ENCODE measurements at regions of chr10 and their contacts with region 1.

Region 1: GRCh38 chr10:97498076-97498840 is at the start of gene MMS19:
- DNase-seq: peak; percentile 100
- ATAC-seq: peak; percentile 91
- H3K4me3 Mint-ChIP-seq: peak within 1 kb of the TSS; percentile 87
- H3K27ac Mint-ChIP-seq: peak within 1 kb of the TSS; percentile 97
- H3K4me1 Mint-ChIP-seq: peaks cover 38% of the 10 kb centered on the region
- H3K27me3 Mint-ChIP-seq: peaks cover 20% of the 10 kb centered on the region
- total RNA-seq, gene MMS19: 91.3 to 107 TPM

Region 2: DNA sequence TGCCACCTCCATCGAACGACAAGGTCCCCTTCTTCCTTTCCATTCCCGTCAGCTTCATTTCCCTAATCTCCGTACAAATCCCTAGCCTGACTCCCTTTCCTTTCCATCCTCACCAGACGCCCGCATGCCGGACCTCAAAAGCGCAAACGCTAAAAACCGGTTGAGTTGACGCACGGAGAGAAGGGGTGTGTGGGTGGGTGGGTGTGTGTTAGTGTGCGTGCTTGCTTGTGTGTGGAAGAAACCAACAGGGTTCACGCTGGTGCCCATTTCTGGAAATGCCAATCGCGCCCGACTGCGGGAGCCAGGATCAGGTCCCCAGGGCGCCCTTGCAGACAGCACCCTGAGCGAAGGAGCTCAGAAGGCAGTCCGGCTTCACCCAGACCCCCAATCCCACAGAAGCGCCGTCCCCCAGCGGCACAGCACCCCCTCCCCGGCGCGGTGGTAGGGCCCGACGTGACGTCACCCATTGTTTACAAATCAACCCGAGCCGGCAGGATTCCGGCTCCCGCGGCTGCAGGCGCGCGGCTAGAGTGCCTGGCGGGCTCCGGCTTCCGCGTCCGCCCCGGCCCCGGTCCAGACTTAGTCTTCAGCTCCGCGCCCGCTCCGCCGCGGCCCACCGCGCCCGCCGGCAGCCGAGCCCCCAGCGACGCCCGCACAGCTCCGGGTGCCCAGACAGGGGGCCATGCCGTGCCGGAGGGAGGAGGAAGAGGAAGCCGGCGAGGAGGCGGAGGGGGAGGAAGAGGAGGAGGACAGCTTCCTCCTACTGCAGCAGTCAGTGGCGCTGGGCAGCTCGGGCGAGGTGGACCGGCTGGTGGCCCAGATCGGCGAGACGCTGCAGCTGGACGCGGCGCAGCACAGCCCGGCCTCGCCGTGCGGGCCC is 179.2 kb before region 1 on chr10 and contains the start of gene FRAT1:
- CTCF ChIA-PET with region 1: no interaction called
- POLR2A ChIA-PET with region 1: no interaction called
- intact Hi-C with region 1: loop called in 1 of 2 experiments (anchors 1 kb)
- DNase-seq: peak; percentile 92
- ATAC-seq: peak; percentile 64
- H3K4me3 Mint-ChIP-seq: peak within 1 kb of the TSS; percentile 91
- H3K27ac Mint-ChIP-seq: peak within 1 kb of the TSS; percentile 99
- H3K4me1 Mint-ChIP-seq: peaks cover 29% of the 10 kb centered on the region
- H3K27me3 Mint-ChIP-seq: no peaks in the 10 kb centered on the region
- total RNA-seq, gene FRAT1: 1.3 to 1.8 TPM

Region 3: GRCh38 chr10:97390091-97390490 is 108.2 kb before region 1 on chr10:
- CTCF ChIA-PET with region 1: no interaction called
- POLR2A ChIA-PET with region 1: no interaction called
- intact Hi-C with region 1: no loop called
- DNase-seq: no peak
- ATAC-seq: no peak
- H3K4me3 Mint-ChIP-seq: no peak overlapping the region
- H3K27ac Mint-ChIP-seq: no peak overlapping the region
- H3K4me1 Mint-ChIP-seq: no peaks in the 10 kb centered on the region
- H3K27me3 Mint-ChIP-seq: no peaks in the 10 kb centered on the region

Region 4: GRCh38 chr10:97425964-97426775 is 72.1 kb before region 1 on chr10 and contains the start of gene PGAM1:
- CTCF ChIA-PET with region 1: interaction called, 6 read pairs
- POLR2A ChIA-PET with region 1: interaction called, 3 read pairs
- intact Hi-C with region 1: loop called in 1 of 2 experiments (anchors 1 kb)
- DNase-seq: peak; percentile 97
- ATAC-seq: peak; percentile 71
- H3K4me3 Mint-ChIP-seq: peak within 1 kb of the TSS; percentile 96
- H3K27ac Mint-ChIP-seq: peak within 1 kb of the TSS; percentile 98
- H3K4me1 Mint-ChIP-seq: peaks cover 52% of the 10 kb centered on the region
- H3K27me3 Mint-ChIP-seq: no peaks in the 10 kb centered on the region
- total RNA-seq, gene PGAM1: 1,151 to 1,499 TPM

Region 5: GRCh38 chr10:97632949-97633884 is 135.0 kb after region 1 on chr10 and contains the start of gene MORN4:
- CTCF ChIA-PET with region 1: no interaction called
- POLR2A ChIA-PET with region 1: no interaction called
- intact Hi-C with region 1: loop called (anchors 1 to 2 kb)
- DNase-seq: peak; percentile 94
- ATAC-seq: peak; percentile 99
- H3K4me3 Mint-ChIP-seq: peak within 1 kb of the TSS; percentile 85
- H3K27ac Mint-ChIP-seq: peak within 1 kb of the TSS; percentile 85
- H3K4me1 Mint-ChIP-seq: peaks cover 16% of the 10 kb centered on the region
- H3K27me3 Mint-ChIP-seq: no peaks in the 10 kb centered on the region
- total RNA-seq, gene MORN4: 3.9 to 5.3 TPM

Region 6: DNA sequence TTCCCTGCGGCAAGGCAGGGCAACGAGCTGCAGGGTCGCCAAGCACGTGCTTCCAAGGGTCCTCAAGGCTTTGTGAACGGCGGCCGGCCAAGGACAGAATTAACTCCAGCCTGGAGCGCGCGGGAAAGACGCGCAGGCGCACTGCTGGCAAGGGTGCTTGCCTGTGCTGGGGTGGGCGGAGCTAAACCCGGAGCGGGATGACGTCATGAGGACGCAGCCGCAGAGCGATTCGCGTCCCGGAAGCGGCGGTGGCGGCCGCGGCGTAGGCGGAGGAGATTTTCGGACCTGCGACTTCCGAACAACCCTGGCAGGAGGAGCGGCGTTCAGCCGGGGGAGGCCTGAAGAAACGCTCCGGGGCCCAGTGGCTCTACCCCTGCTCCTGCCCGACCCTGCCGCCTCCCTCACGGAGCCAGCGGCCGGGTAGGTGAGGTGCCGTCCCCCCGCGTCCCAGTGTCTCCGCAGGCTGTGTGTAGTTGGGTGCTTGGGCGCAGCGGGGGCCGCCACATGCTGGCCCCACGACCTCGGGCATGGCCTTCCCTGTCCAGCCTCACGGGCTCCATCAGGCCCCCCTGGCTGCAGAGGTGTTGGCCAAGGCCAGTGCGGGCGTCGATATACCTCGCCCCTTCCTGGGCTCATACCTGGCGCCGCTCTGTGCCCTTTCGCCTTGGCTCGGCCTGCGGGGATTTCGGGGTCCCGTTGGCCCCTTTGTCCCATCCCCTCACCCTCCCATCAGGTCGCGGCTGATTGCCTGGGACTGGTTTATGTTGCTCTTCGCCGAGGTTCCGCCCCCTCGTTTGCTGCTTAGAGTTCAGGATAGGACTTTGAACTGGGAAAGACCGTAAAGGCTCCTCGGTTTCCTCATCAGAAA is 238.9 kb after region 1 on chr10 and contains the start of gene ZFYVE27:
- CTCF ChIA-PET with region 1: no interaction called
- POLR2A ChIA-PET with region 1: no interaction called
- intact Hi-C with region 1: loop called in 1 of 2 experiments (anchors 1 kb)
- DNase-seq: peak; percentile 98
- ATAC-seq: peak; percentile 90
- H3K4me3 Mint-ChIP-seq: peak within 1 kb of the TSS; percentile 88
- H3K27ac Mint-ChIP-seq: peak within 1 kb of the TSS; percentile 93
- H3K4me1 Mint-ChIP-seq: peaks cover 45% of the 10 kb centered on the region
- H3K27me3 Mint-ChIP-seq: no peaks in the 10 kb centered on the region
- total RNA-seq, gene ZFYVE27: 20.2 to 22.6 TPM

Region 7: GRCh38 chr10:98150544-98150943 is 652.3 kb after region 1 on chr10:
- CTCF ChIA-PET with region 1: no interaction called
- POLR2A ChIA-PET with region 1: no interaction called
- intact Hi-C with region 1: no loop called
- DNase-seq: no peak
- ATAC-seq: no peak
- H3K4me3 Mint-ChIP-seq: no peak overlapping the region
- H3K27ac Mint-ChIP-seq: no peak overlapping the region
- H3K4me1 Mint-ChIP-seq: peaks cover 14% of the 10 kb centered on the region
- H3K27me3 Mint-ChIP-seq: no peaks in the 10 kb centered on the region

Measured in activated CD4-positive, alpha-beta T cell treated with anti-CD3 and anti-CD28 coated beads for 36 hours (primary cell).